Right ventricle myocardium inferior (tissue), 1 donor: ENCODE measurements at regions of chr4 and their contacts with region 1.

Region 1: GRCh38 chr4:121998002-121998401 is 46.1 kb upstream of the TRPC3 start:
- DNase-seq: no peak
- ATAC-seq: peak; percentile 52

Region 2: DNA sequence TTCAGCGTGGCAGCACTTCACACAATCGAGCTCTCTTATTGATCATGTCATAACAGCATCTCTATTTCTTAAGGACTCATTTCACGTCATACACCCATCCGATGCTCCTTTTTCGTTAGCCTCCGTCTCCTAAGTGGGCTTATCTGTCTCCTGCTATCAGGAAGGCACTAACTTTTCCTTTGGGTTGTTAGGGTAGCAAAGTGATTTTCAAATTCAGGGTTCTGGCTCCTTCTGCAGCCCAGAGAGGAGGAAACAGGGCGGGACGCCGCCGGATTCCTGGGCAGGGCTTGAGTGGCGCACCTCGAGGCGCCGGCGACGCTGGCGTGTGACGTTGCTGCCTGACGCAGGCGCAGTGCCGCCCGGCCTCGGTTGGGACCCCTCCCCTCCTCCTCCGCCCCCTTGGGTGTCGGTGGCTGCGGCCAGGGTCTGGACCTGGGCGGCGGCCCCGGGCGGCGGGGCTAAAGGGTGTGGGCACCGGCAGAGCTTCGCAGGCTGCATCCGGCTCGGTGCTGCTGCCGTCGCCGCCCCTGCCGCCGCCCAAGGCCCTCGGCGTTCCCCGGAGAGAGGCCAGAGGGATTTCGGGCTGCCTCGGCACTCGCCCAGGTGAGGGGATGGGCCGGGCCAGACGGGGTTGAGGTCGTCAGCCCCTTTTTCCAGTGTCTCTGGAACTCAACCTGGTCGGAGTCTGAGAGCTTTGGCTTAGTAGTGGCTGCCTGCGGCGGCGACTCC is 154.1 kb after region 1 on chr4 and contains the start of gene BLTP1:
- intact Hi-C with region 1: loop called (anchors 5 kb)
- DNase-seq: peak; percentile 96
- ATAC-seq: peak; percentile 100
- total RNA-seq, gene BLTP1: 28.9 TPM

Region 3: GRCh38 chr4:122360754-122361153 is 362.8 kb after region 1 on chr4:
- intact Hi-C with region 1: no loop called
- DNase-seq: no peak
- ATAC-seq: no peak